ENCODE measurements at regions of chr17 and their contacts with region 1.

Region 1: GRCh38 chr17:35537601-35538141 is at the start of gene SLFN12L:
- DNase-seq: peak; percentile 61
- H3K4me3 Mint-ChIP-seq: peak within 1 kb of the TSS; percentile 85
- H3K27ac Mint-ChIP-seq: peak within 1 kb of the TSS; percentile 100
- H3K4me1 Mint-ChIP-seq: peaks cover 54% of the 10 kb centered on the region
- H3K27me3 Mint-ChIP-seq: no peaks in the 10 kb centered on the region
- total RNA-seq, gene SLFN12L: 45.2 and 49.3 TPM in 2 replicates

Region 2: DNA sequence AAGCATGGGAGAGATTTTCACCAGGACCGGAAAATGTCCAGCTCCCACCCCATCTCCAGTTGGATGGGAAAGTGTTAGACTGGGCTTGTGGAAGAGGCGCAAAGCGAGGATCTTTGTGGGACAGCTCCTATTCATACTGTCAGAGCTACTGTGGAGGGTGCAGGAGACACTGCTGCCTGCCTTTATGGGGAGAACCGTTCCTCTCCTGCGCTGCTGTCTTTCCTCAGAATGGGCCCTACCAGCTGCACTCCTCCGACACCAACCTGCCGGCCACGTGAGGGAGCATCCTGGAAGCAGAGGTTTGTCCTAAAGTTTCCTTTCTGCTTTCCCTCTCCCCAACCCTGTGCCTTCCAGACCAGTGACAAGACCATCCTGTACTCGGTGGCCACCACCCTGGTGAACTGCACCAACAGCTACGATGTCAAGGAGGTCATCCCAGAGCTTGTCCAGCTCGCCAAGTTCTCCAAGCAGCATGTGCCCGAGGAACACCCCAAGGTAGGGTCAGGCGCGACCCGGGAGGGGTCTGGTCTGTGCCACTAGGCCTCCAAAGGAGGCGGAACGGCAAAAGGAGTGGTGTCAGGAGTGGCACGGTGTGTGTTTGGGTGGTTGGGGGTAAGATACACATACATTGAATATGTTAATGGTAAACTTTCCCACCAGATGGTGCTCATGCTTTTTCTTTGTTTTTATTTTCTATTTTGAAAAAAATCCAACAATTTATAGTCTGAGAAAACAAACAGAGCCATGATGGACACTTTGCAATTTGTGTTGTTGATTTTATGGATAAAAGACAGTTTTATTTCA is 366.5 kb before region 1 on chr17:
- intact Hi-C with region 1: loop called (anchors 1 kb)
- DNase-seq: peak; percentile 15
- H3K4me3 Mint-ChIP-seq: peak overlapping the region; percentile 5
- H3K27ac Mint-ChIP-seq: no peak overlapping the region
- H3K4me1 Mint-ChIP-seq: peaks cover 35% of the 10 kb centered on the region
- H3K27me3 Mint-ChIP-seq: peaks cover 7% of the 10 kb centered on the region

Region 3: DNA sequence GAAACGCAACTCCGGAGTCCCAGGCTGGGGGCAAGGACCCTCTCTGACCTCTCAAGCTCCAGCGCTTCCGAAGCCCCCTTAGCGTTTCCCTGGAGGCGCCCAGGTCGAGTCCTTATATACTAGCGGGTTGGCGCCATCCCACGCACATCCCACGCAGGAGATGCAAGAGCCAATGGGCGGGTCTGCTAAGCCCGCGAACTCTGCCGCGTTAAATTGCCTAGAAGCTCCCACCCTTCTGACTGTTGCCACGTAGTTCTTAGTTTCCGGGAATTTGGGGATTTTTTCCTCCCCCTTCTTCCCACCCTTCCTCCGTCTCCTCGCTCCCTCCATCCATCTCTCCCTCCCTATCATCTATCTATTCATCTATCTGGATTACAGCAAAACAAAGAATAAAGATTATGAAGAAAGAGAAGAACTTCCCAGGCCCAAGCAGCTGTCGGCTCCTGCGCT is 164.1 kb before region 1 on chr17 and contains the start of gene SLFN11:
- intact Hi-C with region 1: loop called (anchors 1 kb)
- DNase-seq: peak; percentile 79
- H3K4me3 Mint-ChIP-seq: peak within 1 kb of the TSS; percentile 93
- H3K27ac Mint-ChIP-seq: peak within 1 kb of the TSS; percentile 95
- H3K4me1 Mint-ChIP-seq: peaks cover 66% of the 10 kb centered on the region
- H3K27me3 Mint-ChIP-seq: no peaks in the 10 kb centered on the region
- total RNA-seq, gene SLFN11: 70.8 and 76.0 TPM in 2 replicates

Region 4: GRCh38 chr17:35486920-35487732 is 50.5 kb before region 1 on chr17:
- intact Hi-C with region 1: loop called (anchors 1 kb)
- DNase-seq: peak; percentile 71
- H3K4me3 Mint-ChIP-seq: peak overlapping the region; percentile 92
- H3K27ac Mint-ChIP-seq: peak overlapping the region; percentile 93
- H3K4me1 Mint-ChIP-seq: peaks cover 78% of the 10 kb centered on the region
- H3K27me3 Mint-ChIP-seq: peaks cover 2% of the 10 kb centered on the region

Region 5: GRCh38 chr17:35578197-35578928 is 40.7 kb after region 1 on chr17 and contains the start of gene PEX12:
- intact Hi-C with region 1: loop called (anchors 1 kb)
- DNase-seq: peak; percentile 82
- H3K4me3 Mint-ChIP-seq: peak within 1 kb of the TSS; percentile 100
- H3K27ac Mint-ChIP-seq: peak within 1 kb of the TSS; percentile 99
- H3K4me1 Mint-ChIP-seq: peaks cover 36% of the 10 kb centered on the region
- H3K27me3 Mint-ChIP-seq: peaks cover 2% of the 10 kb centered on the region
- total RNA-seq, gene PEX12: 5.0 and 5.9 TPM in 2 replicates

Region 6: GRCh38 chr17:35841505-35841904 is 303.8 kb after region 1 on chr17:
- intact Hi-C with region 1: no loop called
- DNase-seq: no peak
- H3K4me3 Mint-ChIP-seq: no peak overlapping the region
- H3K27ac Mint-ChIP-seq: no peak overlapping the region
- H3K4me1 Mint-ChIP-seq: no peaks in the 10 kb centered on the region
- H3K27me3 Mint-ChIP-seq: no peaks in the 10 kb centered on the region

Region 7: GRCh38 chr17:35879773-35880654 is 342.3 kb after region 1 on chr17 and contains the start of gene CCL5:
- intact Hi-C with region 1: no loop called
- DNase-seq: peak; percentile 66
- H3K4me3 Mint-ChIP-seq: peak within 1 kb of the TSS; percentile 86
- H3K27ac Mint-ChIP-seq: peak within 1 kb of the TSS; percentile 99
- H3K4me1 Mint-ChIP-seq: peaks cover 57% of the 10 kb centered on the region
- H3K27me3 Mint-ChIP-seq: no peaks in the 10 kb centered on the region
- total RNA-seq, gene CCL5: 25.4 and 30.2 TPM in 2 replicates